ENCODE measurements at regions of chr17 and their contacts with region 1.

Region 1: DNA sequence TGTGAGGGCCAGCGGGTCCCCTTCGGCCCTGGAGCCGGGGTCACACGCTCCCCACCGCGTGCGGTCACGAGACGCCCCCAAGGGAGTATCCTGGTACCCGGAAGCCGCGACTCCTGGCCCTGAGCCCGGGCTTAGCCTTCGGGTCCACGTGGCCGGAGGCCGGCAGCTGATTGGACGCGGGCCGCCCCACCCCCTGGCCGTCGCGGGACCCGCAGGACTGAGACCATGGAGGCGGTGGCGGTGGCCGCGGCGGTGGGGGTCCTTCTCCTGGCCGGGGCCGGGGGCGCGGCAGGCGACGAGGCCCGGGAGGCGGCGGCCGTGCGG is at the start of gene NAGLU:
- DNase-seq: peak; percentile 93 to 96
- H3K4me3 ChIP-seq: peak within 1 kb of the TSS; percentile 50
- H3K4me3 Mint-ChIP-seq: peak within 1 kb of the TSS; percentile 72
- H3K27ac Mint-ChIP-seq: peak within 1 kb of the TSS; percentile 24
- H3K4me1 ChIP-seq: peaks cover 28% of the 10 kb centered on the region
- H3K4me1 Mint-ChIP-seq: peaks cover 34% of the 10 kb centered on the region
- H3K27me3 ChIP-seq: no peaks in the 10 kb centered on the region
- H3K27me3 Mint-ChIP-seq: no peaks in the 10 kb centered on the region
- CTCF ChIP-seq: no peak
- total RNA-seq, gene NAGLU: 28.7 and 29.2 TPM in 2 replicates

Region 2: GRCh38 chr17:42337442-42337841 is 198.6 kb before region 1 on chr17:
- CTCF ChIA-PET with region 1: no interaction called
- POLR2A ChIA-PET with region 1: no interaction called
- intact Hi-C with region 1: no loop called
- DNase-seq: no peak
- H3K4me3 ChIP-seq: no peak overlapping the region
- H3K4me3 Mint-ChIP-seq: no peak overlapping the region
- H3K27ac Mint-ChIP-seq: no peak overlapping the region
- H3K4me1 ChIP-seq: no peaks in the 10 kb centered on the region
- H3K4me1 Mint-ChIP-seq: no peaks in the 10 kb centered on the region
- H3K27me3 ChIP-seq: no peaks in the 10 kb centered on the region
- H3K27me3 Mint-ChIP-seq: no peaks in the 10 kb centered on the region
- CTCF ChIP-seq: no peak

Region 3: DNA sequence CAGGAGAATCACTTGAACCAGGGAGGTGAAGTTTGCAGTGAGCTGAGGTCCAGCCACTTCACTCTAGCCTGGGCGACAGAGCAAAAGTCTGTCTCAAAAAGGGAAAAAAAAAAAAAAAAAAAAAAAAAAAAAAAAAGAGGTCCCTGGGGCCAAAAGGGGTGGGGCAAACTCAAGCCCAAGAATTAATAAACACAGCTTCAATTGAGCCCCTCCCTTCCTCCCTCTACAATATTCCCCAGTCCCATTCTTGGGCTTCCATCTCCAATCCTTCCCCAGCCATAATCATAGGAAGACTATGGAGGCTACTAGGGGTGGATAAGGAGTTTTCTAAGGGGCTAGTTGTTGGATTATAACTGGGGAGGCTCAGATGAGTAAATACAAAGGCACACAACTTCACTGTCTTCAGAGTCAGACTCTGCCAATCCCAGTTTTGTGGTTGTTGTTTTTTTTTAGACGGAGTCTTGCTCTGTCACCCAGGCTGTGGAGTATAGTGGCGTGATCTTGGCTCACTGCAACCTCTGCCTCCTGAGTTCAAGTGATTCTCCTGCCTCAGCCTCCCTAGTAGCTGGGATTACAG is 122.5 kb before region 1 on chr17:
- CTCF ChIA-PET with region 1: no interaction called
- POLR2A ChIA-PET with region 1: interaction called, 13 read pairs
- intact Hi-C with region 1: no loop called
- DNase-seq: no peak
- H3K4me3 ChIP-seq: no peak overlapping the region
- H3K4me3 Mint-ChIP-seq: no peak overlapping the region
- H3K27ac Mint-ChIP-seq: no peak overlapping the region
- H3K4me1 ChIP-seq: no peaks in the 10 kb centered on the region
- H3K4me1 Mint-ChIP-seq: peaks cover 10% of the 10 kb centered on the region
- H3K27me3 ChIP-seq: no peaks in the 10 kb centered on the region
- H3K27me3 Mint-ChIP-seq: no peaks in the 10 kb centered on the region
- CTCF ChIP-seq: no peak

Region 4: DNA sequence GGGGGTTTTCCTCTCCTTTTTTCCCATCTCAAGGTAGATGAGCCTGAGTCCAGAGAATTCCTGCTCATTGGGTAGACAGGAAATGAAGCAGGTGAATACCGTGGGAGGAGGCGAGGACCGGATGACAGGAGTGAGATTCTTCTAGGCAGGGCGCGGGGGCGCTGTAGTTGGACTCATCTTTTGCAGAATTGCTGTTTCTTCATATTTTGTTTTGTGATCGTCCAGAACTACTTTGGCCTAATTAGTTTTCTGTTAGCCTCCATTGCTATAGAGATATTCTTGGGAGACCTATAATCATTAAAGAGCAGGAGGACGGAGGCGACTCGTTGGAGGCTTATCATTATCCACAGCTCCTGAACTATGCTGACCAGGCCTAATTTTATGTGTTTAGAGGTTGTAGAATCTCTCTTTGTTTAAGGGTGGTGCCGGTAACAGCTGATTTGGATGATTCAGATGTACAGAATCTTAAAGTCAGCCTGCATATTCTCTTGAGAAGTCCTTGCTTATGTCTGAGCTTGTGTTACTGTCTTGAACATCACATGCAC is 76.7 kb before region 1 on chr17:
- CTCF ChIA-PET with region 1: no interaction called
- POLR2A ChIA-PET with region 1: no interaction called
- intact Hi-C with region 1: loop called (anchors 2 kb)
- DNase-seq: peak; percentile 54 to 68
- H3K4me3 ChIP-seq: peak overlapping the region; percentile 82
- H3K4me3 Mint-ChIP-seq: peak overlapping the region; percentile 100
- H3K27ac Mint-ChIP-seq: peak overlapping the region; percentile 98
- H3K4me1 ChIP-seq: peaks cover 33% of the 10 kb centered on the region
- H3K4me1 Mint-ChIP-seq: peaks cover 35% of the 10 kb centered on the region
- H3K27me3 ChIP-seq: no peaks in the 10 kb centered on the region
- H3K27me3 Mint-ChIP-seq: no peaks in the 10 kb centered on the region
- CTCF ChIP-seq: peak; percentile 32 to 51

Region 5: DNA sequence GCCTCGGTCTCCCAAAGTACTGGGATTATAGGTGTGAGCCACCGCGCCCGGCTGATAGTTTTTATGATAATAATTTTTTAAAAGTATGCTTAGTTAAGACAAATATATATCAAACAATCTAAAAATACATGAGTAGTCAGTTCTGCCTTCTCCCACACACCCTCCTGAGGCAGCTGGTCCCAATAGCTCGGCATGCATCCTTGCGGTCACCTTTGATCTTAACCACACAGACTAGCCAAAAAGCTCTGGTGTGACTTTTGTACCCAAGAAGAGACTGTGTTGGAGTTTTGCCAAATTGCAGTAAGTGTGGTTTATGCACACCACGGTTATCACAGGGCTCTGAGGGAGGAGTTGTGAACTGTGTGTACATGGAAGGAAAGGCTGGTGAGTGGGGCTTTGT is 51.7 kb before region 1 on chr17:
- CTCF ChIA-PET with region 1: no interaction called
- POLR2A ChIA-PET with region 1: no interaction called
- intact Hi-C with region 1: no loop called
- DNase-seq: no peak
- H3K4me3 ChIP-seq: no peak overlapping the region
- H3K4me3 Mint-ChIP-seq: no peak overlapping the region
- H3K27ac Mint-ChIP-seq: no peak overlapping the region
- H3K4me1 ChIP-seq: no peaks in the 10 kb centered on the region
- H3K4me1 Mint-ChIP-seq: no peaks in the 10 kb centered on the region
- H3K27me3 ChIP-seq: no peaks in the 10 kb centered on the region
- H3K27me3 Mint-ChIP-seq: no peaks in the 10 kb centered on the region
- CTCF ChIP-seq: no peak

Region 6: DNA sequence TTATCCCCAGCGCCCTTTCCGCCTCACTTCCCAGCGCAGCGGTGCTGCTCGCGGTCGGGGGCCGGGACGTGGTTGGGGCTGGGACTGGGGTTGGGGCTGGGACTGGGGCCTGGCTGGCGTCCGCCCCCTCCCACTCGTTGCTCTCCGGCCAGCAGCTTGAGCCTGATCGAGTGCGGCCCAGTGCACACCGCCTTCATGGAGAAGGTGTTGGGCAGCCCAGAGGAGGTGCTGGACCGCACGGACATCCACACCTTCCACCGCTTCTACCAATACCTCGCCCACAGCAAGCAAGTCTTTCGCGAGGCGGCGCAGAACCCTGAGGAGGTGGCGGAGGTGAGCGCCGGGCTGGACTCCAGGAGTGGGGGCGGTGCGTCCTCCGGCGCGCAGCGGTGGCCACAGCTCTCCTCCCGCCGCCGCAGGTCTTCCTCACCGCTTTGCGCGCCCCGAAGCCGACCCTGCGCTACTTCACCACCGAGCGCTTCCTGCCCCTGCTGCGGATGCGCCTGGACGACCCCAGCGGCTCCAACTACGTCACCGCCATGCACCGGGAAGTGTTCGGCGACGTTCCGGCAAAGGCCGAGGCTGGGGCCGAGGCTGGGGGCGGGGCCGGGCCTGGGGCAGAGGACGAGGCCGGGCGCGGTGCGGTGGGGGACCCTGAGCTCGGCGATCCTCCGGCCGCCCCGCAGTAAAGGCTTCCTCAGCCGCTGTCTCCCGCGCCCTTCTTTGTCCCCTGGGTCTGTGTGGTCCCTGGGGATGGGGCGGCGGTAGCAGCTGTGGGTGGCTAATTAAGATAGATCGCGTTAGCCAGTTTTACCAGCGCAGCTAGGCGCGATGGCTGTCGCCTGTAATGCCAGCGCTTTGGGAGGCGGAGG is 18.5 kb after region 1 on chr17:
- CTCF ChIA-PET with region 1: interaction called, 6 read pairs
- POLR2A ChIA-PET with region 1: interaction called, 23 read pairs
- intact Hi-C with region 1: no loop called
- DNase-seq: peak; percentile 88 to 93
- H3K4me3 ChIP-seq: peak overlapping the region; percentile 88
- H3K4me3 Mint-ChIP-seq: peak overlapping the region; percentile 97
- H3K27ac Mint-ChIP-seq: peak overlapping the region; percentile 94
- H3K4me1 ChIP-seq: peaks cover 8% of the 10 kb centered on the region; the same call in 1 of the 2 replicates
- H3K4me1 Mint-ChIP-seq: peaks cover 8% of the 10 kb centered on the region
- H3K27me3 ChIP-seq: no peaks in the 10 kb centered on the region
- H3K27me3 Mint-ChIP-seq: no peaks in the 10 kb centered on the region
- CTCF ChIP-seq: no peak

Region 7: GRCh38 chr17:42667123-42667951 is 131.3 kb after region 1 on chr17:
- CTCF ChIA-PET with region 1: no interaction called
- POLR2A ChIA-PET with region 1: no interaction called
- intact Hi-C with region 1: no loop called
- DNase-seq: no peak
- H3K4me3 ChIP-seq: no peak overlapping the region
- H3K4me3 Mint-ChIP-seq: no peak overlapping the region
- H3K27ac Mint-ChIP-seq: no peak overlapping the region
- H3K4me1 ChIP-seq: no peaks in the 10 kb centered on the region
- H3K4me1 Mint-ChIP-seq: no peaks in the 10 kb centered on the region
- H3K27me3 ChIP-seq: no peaks in the 10 kb centered on the region
- H3K27me3 Mint-ChIP-seq: no peaks in the 10 kb centered on the region
- CTCF ChIP-seq: no peak

Measured in Caco-2 (cell line).